ENCODE measurements at regions of chr17 and their contacts with region 1.

Region 1: GRCh38 chr17:57541472-57542394 is 203.4 kb downstream of the CCDC182 start:
- DNase-seq: peak; percentile 76
- H3K4me3 ChIP-seq: peak overlapping the region in 1 of 2 experiments; percentile 10; a peak in 1 of 4 replicates
- H3K27ac ChIP-seq: peak overlapping the region; percentile 65 to 100
- H3K4me1 ChIP-seq: peaks cover 52 to 98% of the 10 kb centered on the region in 2 experiments
- H3K27me3 ChIP-seq: no peaks in the 10 kb centered on the region
- CTCF ChIP-seq: no peak
- EP300 ChIP-seq: peak; percentile 71 to 97; a peak in 3 of 4 replicates
- RAD21 ChIP-seq: peak; percentile 54

Region 2: GRCh38 chr17:57422574-57423164 is 119.1 kb before region 1 on chr17:
- CTCF ChIA-PET with region 1: interaction called, 3 read pairs
- POLR2A ChIA-PET with region 1: interaction called, 12 read pairs
- DNase-seq: no peak
- H3K4me3 ChIP-seq: no peak overlapping the region
- H3K27ac ChIP-seq: peak overlapping the region; percentile 11 to 84
- H3K4me1 ChIP-seq: peaks cover 37 to 74% of the 10 kb centered on the region in 2 experiments
- H3K27me3 ChIP-seq: no peaks in the 10 kb centered on the region
- CTCF ChIP-seq: no peak
- EP300 ChIP-seq: no peak
- RAD21 ChIP-seq: no peak

Region 3: DNA sequence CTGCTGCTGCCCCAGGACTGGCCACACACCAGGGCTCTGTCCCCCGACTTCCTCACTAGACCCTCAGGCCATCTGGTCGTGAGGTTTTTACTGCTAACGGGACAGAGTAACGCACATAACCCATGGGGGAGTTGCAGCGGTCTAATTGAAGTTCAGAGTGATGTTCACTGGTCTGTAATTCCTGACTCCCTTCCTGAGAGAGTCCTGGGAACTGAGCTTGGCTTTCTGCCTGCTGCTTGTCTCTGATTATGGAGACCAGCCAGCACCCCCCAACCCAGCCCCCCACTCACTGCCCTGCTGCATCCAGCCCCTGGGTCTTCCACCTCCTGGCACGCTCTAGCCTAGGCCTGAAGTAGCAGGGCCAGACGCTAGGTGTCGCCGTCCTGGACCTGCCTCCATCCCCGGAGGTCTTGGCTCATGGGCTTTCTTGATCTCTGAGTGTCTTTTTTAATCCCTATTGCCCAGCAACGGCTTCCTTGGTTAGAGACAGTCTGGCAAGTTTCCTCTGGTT is 10.4 kb after region 1 on chr17:
- CTCF ChIA-PET with region 1: interaction called, 62 read pairs
- POLR2A ChIA-PET with region 1: interaction called, 13 read pairs
- DNase-seq: peak; percentile 84
- H3K4me3 ChIP-seq: no peak overlapping the region
- H3K27ac ChIP-seq: peak overlapping the region in 1 of 2 experiments; percentile 99; a peak in 2 of 4 replicates
- H3K4me1 ChIP-seq: peaks cover 6 to 86% of the 10 kb centered on the region in 2 experiments; a peak in 2 of 4 replicates
- H3K27me3 ChIP-seq: no peaks in the 10 kb centered on the region
- CTCF ChIP-seq: peak; percentile 52
- EP300 ChIP-seq: peak in 1 of 2 experiments; percentile 61; a peak in 1 of 4 replicates
- RAD21 ChIP-seq: peak; percentile 65

Region 4: GRCh38 chr17:57570724-57571344 is 29.1 kb after region 1 on chr17:
- CTCF ChIA-PET with region 1: interaction called, 20 read pairs
- POLR2A ChIA-PET with region 1: interaction called, 11 read pairs
- DNase-seq: no peak
- H3K4me3 ChIP-seq: no peak overlapping the region
- H3K27ac ChIP-seq: peak overlapping the region in 1 of 2 experiments; percentile 100; a peak in 2 of 4 replicates
- H3K4me1 ChIP-seq: peaks cover 0 to 87% of the 10 kb centered on the region in 2 experiments; a peak in 2 of 4 replicates
- H3K27me3 ChIP-seq: no peaks in the 10 kb centered on the region
- CTCF ChIP-seq: no peak
- EP300 ChIP-seq: peak in 1 of 2 experiments; percentile 41; a peak in 1 of 4 replicates
- RAD21 ChIP-seq: peak; percentile 5; the same call in 1 of the 2 replicates

Region 5: GRCh38 chr17:57622683-57623433 is 81.1 kb after region 1 on chr17:
- CTCF ChIA-PET with region 1: interaction called, 5 read pairs
- POLR2A ChIA-PET with region 1: interaction called, 22 read pairs
- DNase-seq: peak; percentile 82
- H3K4me3 ChIP-seq: no peak overlapping the region
- H3K27ac ChIP-seq: peak overlapping the region; percentile 87 to 100
- H3K4me1 ChIP-seq: peaks cover 53 to 84% of the 10 kb centered on the region in 2 experiments
- H3K27me3 ChIP-seq: no peaks in the 10 kb centered on the region
- CTCF ChIP-seq: no peak
- EP300 ChIP-seq: peak; percentile 71 to 97; a peak in 3 of 4 replicates
- RAD21 ChIP-seq: peak; percentile 46

Measured in SK-N-SH (cell line).